Posterior vena cava (tissue), 2 donors: ENCODE measurements at regions of chr16 and their contacts with region 1.

Region 1: DNA sequence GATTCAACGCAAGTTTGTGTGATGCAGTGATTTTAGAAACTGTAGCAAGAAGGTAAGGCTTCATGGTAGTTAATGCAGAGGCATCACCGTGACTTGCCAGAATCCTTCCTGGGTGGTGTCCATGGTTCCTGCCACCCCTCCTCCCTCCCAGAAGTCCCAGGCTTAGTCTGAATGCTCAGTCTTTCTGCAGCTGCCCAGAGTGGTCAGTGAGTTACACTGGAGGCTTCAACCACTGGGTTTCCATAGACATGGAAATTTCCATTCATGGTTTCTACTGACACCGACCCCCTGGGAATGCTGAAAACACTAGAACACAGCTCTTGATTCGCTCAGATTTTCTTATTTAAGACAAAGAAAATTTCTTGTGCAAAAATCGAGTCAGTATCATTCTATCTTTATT is 159.4 kb upstream of the HSBP1 start:
- DNase-seq: no peak

Region 2: DNA sequence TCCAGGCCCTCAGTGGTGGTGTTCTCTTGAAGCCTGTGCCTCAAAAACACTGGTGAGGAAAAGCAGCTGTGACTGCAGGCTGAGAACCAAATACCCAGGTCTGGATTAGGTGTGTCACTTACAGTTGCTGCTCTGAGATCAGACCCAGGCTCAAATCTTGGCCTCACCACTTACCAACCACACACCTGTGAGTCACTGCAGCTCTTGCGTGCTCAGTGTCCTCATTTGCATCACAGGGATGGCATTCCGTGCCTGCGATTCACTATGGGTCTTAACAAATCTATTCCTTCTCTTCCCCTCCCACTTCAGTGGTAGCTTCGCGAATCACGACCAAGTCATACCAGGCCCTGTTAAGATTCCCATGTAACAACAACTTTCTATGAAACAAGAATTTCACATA is 74.0 kb before region 1 on chr16:
- intact Hi-C with region 1: no loop called
- DNase-seq: no peak

Region 3: GRCh38 chr16:83630979-83631378 is 17.4 kb before region 1 on chr16:
- intact Hi-C with region 1: loop called in 1 of 2 experiments (anchors 1 kb)
- DNase-seq: no peak